ENCODE measurements at regions of chr9 and their contacts with region 1.

Region 1: GRCh38 chr9:87500491-87501270 is 3.0 kb downstream of the DAPK1 start:
- DNase-seq: no peak
- H3K4me3 Mint-ChIP-seq: peak overlapping the region; percentile 86
- H3K27ac Mint-ChIP-seq: peak overlapping the region; percentile 45
- H3K4me1 Mint-ChIP-seq: peaks cover 48% of the 10 kb centered on the region
- H3K27me3 Mint-ChIP-seq: peaks cover 23% of the 10 kb centered on the region

Region 2: GRCh38 chr9:87336914-87337333 is 163.8 kb before region 1 on chr9:
- intact Hi-C with region 1: loop called (anchors 5 kb)
- DNase-seq: no peak
- H3K4me3 Mint-ChIP-seq: peak overlapping the region; percentile 65
- H3K27ac Mint-ChIP-seq: no peak overlapping the region
- H3K4me1 Mint-ChIP-seq: peaks cover 8% of the 10 kb centered on the region
- H3K27me3 Mint-ChIP-seq: peaks cover 27% of the 10 kb centered on the region

Region 3: GRCh38 chr9:87375397-87376073 is 125.1 kb before region 1 on chr9:
- intact Hi-C with region 1: loop called (anchors 1 kb)
- DNase-seq: no peak
- H3K4me3 Mint-ChIP-seq: no peak overlapping the region
- H3K27ac Mint-ChIP-seq: no peak overlapping the region
- H3K4me1 Mint-ChIP-seq: peaks cover 11% of the 10 kb centered on the region
- H3K27me3 Mint-ChIP-seq: peaks cover 10% of the 10 kb centered on the region

Region 4: GRCh38 chr9:87464110-87464965 is 36.3 kb before region 1 on chr9:
- intact Hi-C with region 1: loop called (anchors 1 kb)
- DNase-seq: no peak
- H3K4me3 Mint-ChIP-seq: peak overlapping the region; percentile 39
- H3K27ac Mint-ChIP-seq: peak overlapping the region; percentile 92
- H3K4me1 Mint-ChIP-seq: peaks cover 18% of the 10 kb centered on the region
- H3K27me3 Mint-ChIP-seq: no peaks in the 10 kb centered on the region

Region 5: DNA sequence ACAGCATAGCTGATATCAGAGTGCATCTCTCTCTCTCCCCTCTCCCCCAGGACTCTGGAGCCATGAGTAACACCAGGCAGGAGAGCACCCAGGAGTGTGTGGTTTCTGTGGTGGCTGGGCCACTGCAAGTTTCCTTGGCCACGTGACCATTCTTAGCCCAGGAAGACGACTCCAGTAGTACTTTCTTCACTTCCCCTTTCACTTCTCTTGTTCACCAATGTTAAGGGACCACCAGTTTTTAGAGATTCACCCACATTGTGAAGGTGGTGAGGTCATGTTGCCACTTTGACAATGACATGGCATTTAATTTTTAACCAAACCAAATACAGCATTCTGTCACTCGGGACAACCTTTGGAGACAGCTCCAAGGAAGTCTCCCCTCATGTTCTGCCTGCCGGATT is 20.9 kb before region 1 on chr9:
- intact Hi-C with region 1: no loop called
- DNase-seq: no peak
- H3K4me3 Mint-ChIP-seq: no peak overlapping the region
- H3K27ac Mint-ChIP-seq: no peak overlapping the region
- H3K4me1 Mint-ChIP-seq: peaks cover 8% of the 10 kb centered on the region
- H3K27me3 Mint-ChIP-seq: peaks cover 6% of the 10 kb centered on the region

Region 6: DNA sequence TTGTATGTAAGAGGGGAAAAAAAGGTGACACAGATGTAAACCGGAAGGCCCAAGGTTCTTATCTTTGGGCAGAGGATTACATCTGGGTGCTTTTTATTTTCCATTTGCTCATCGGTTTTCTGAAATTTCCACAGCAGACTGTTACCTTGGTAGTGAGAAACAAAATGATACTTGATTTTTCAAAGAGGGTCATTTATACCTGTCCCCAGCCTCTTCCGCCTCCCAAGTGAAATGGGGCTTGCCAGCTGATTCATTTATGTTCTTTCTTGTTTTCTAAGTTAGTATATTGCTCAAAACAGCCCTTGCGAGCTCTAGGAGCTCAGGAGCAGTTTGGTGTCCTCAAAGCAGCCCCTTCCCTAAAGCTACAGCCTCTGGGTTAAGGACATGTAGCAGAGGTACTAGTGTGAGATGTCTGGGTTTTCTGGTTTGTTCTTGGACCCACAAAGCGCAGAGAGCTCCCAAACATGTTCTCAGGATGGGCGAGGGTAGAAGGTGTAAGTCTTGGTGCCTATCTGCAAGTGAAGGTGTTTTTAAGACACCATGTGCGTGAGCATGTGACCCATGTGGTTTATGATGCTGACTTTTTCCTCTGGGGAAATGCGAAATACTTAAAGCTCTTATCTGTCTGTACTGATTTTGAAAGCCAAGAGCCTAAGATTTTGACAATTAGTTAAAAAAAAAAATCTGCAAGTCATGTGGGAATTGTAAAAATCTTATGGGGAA is 35.3 kb after region 1 on chr9:
- intact Hi-C with region 1: loop called (anchors 1 kb)
- DNase-seq: peak; percentile 31
- H3K4me3 Mint-ChIP-seq: peak overlapping the region; percentile 16
- H3K27ac Mint-ChIP-seq: peak overlapping the region; percentile 97
- H3K4me1 Mint-ChIP-seq: peaks cover 23% of the 10 kb centered on the region
- H3K27me3 Mint-ChIP-seq: no peaks in the 10 kb centered on the region

Region 7: DNA sequence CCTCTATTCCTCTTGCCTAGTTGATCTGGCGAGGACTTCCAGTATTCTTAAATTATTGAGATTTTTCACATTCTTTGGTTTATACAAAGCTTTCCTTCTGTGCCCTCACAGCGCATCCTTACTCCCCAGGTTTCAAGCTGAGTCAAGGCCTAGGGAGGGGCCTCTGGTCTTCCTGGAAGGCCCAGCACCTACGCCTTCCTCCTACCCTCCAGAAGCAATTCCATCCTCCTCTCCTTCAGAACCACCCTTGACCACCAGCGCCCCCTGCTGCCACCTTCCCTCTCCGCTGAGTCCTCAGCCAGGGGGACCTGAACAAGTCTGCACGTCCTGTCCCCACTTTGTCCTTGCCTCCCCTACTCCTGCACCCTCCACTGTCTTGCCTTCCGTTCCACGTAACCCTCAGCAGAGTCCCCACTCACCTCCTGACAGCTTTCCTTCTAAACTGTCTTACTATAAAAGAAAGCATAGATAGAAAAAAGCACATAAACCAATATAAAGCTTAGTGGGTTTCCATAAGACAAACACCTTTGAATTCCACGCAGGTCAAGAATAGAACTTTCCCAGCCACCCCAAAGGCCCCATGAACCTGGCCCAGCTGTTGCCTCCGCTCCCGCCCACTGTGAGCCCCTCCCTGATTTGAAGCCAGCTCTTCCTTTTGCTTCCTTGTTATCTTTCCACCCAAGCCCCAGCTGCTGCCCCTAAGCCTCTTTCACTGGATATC is 162.3 kb after region 1 on chr9:
- intact Hi-C with region 1: loop called (anchors 5 kb)
- DNase-seq: peak; percentile 31
- H3K4me3 Mint-ChIP-seq: no peak overlapping the region
- H3K27ac Mint-ChIP-seq: no peak overlapping the region
- H3K4me1 Mint-ChIP-seq: peaks cover 7% of the 10 kb centered on the region
- H3K27me3 Mint-ChIP-seq: no peaks in the 10 kb centered on the region